CD14-positive monocyte (primary cell): ENCODE measurements at regions of chr4 and their contacts with region 1.

Region 1: DNA sequence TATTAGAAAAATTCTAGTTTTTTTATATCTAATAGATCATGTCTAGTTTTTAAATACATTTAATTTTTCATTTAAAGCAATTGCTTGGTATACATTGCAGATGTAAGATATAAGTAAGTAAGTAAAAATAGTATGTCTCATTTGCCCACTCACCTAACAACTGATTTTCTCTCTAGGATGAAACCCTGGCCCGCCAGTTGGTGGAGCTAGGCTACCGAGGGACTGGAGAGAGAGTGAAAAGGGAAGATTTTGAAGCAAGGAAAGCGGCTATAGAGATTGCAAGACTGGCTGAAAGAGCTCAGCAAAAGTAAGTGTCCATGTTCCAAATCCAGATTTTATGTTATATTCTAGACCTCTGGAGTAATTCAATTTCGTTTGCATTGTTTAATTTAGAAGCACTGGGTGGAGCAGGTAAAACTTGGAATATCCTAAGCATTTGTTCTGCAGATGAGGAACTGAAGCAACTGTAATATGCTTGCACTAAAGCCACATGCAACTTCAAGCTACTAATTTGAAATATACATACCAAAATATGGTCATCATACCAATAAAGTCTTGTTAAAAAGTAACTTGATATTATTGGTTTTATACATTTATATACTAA is 27.1 kb downstream of the CFAP299 start:
- DNase-seq: no peak
- H3K4me3 ChIP-seq: no peak overlapping the region
- H3K4me3 Mint-ChIP-seq: no peak overlapping the region
- H3K27ac ChIP-seq: no peak overlapping the region
- H3K27ac Mint-ChIP-seq: no peak overlapping the region
- H3K4me1 ChIP-seq: no peaks in the 10 kb centered on the region
- H3K4me1 Mint-ChIP-seq: no peaks in the 10 kb centered on the region
- H3K27me3 ChIP-seq: peaks cover 5% of the 10 kb centered on the region in 2 donors
- H3K27me3 Mint-ChIP-seq: peaks cover 2 to 14% (median 10%) of the 10 kb centered on the region in 3 donors
- CTCF ChIP-seq: no peak

Region 2: DNA sequence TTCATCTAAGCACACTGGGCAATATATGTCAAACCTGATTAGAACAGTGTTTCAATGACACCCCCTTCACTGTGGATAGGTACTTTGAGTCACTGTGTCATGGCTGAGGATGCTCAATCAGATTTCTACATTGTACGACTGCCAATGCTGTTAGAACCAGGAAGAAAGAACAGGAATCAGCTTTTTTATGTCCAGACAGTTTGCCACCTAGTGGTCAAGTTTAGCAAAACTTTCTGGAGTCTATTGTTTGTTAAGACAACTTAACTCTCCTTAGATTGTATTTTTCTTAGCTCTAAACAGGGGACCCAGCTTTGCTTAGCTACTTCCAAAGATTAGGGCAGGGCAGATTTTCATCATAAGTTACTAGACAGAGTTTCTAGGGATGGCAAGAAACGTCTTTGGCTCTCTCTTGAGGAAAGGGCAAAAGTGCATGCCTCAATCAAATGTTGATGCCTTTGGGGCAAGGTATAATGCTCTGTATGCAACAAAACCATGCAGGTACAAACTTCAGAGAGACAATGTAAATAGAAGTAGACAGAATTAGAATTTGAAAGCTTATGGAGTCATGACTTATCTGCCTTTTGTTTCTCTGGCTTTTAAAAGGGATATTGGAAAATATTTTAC is 627.4 kb after region 1 on chr4:
- intact Hi-C with region 1: loop called in 1 of 2 experiments (anchors 5 kb)
- DNase-seq: peak; percentile 8 to 25 (median 15)
- H3K4me3 ChIP-seq: no peak overlapping the region
- H3K4me3 Mint-ChIP-seq: no peak overlapping the region
- H3K27ac ChIP-seq: no peak overlapping the region
- H3K27ac Mint-ChIP-seq: no peak overlapping the region
- H3K4me1 ChIP-seq: no peaks in the 10 kb centered on the region
- H3K4me1 Mint-ChIP-seq: no peaks in the 10 kb centered on the region
- H3K27me3 ChIP-seq: no peaks in the 10 kb centered on the region
- H3K27me3 Mint-ChIP-seq: no peaks in the 10 kb centered on the region
- CTCF ChIP-seq: peak; percentile 85